Right cardiac atrium (tissue), 5 donors: ENCODE measurements at regions of chr5 and their contacts with region 1.

Region 1: GRCh38 chr5:923281-923873 is 30.7 kb downstream of the TRIP13 start:
- DNase-seq: peak; percentile 89 to 95 (median 94)
- ATAC-seq: peak; percentile 89 to 90
- H3K4me3 ChIP-seq: no peak overlapping the region
- H3K27ac ChIP-seq: no peak overlapping the region
- H3K4me1 ChIP-seq: no peaks in the 10 kb centered on the region
- H3K27me3 ChIP-seq: no peaks in the 10 kb centered on the region

Region 2: DNA sequence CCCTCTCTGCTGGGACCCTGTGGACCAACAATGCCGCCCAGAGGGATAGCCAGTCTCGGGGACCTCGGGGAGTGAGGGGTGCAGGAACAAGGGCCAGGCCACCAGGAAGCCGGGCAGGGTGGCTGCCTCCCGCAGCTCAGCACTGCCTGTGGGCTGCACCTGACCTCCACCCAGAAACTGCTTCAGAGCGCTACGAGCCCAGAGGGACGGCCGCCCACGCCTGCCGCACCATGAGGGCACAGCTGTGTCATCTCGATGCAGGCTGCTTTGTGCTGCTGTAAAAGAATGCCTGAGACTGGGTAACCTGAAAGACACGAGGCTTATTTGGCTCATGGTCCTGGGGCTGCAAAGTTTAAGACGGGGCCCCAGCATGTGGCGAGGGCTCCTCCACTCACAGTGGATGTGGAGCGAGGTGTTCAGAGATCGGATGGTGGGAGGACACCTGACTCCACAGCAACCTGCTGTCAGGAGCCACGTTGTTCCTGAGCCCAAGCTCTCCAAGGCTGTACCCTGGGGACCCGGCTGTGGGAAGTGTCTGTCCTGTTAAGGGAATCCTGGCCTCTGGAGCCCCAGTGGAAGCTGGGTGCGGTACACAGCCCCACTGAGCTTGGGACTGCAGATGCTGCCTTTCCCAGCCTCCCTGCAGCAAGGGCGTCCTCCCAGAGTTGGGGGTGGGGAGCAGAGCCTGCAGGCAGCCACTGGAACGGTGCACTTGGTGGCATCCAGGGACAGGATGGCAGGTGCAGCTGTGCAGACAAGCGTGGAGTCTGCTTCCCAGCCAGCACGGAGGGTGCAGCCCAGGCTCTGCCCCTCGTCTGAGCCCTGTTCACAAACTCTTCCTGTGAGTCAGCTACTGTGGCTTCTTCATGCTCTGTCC is 60.8 kb before region 1 on chr5:
- intact Hi-C with region 1: no loop called
- DNase-seq: peak in 2 of 3 donors; percentile 39 to 45
- ATAC-seq: no peak
- H3K4me3 ChIP-seq: no peak overlapping the region
- H3K27ac ChIP-seq: no peak overlapping the region
- H3K4me1 ChIP-seq: no peaks in the 10 kb centered on the region
- H3K27me3 ChIP-seq: no peaks in the 10 kb centered on the region

Region 3: GRCh38 chr5:1140171-1140817 is 216.9 kb after region 1 on chr5:
- intact Hi-C with region 1: loop called in 2 of 4 experiments (anchors 10 kb)
- DNase-seq: peak; percentile 79 to 93 (median 92)
- ATAC-seq: peak; percentile 78 to 79
- H3K4me3 ChIP-seq: no peak overlapping the region
- H3K27ac ChIP-seq: no peak overlapping the region
- H3K4me1 ChIP-seq: no peaks in the 10 kb centered on the region
- H3K27me3 ChIP-seq: no peaks in the 10 kb centered on the region

Region 4: DNA sequence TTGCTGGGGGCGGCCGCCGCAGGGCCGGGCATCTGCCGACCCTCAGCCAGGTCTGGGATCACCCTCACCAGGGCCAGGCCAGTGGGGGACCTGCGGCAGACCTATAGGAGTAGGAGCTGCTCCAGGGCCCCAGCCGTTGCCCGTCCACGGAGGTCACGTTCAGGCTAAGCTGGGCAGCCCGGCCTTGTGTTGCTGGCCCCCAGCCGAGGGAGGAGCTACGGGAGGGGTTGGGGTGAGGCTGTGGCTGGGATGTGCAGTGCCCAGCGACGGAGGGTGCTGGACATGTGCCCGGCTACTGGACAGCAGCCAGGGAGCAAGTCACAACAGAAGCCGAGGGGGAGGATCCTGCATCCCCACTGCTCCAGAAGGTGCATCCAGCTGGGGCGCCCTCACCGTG is 238.5 kb after region 1 on chr5:
- intact Hi-C with region 1: loop called in 2 of 4 experiments (anchors 5 to 10 kb)
- DNase-seq: peak; percentile 55 to 89 (median 84)
- ATAC-seq: peak; percentile 63 to 74
- H3K4me3 ChIP-seq: no peak overlapping the region
- H3K27ac ChIP-seq: no peak overlapping the region
- H3K4me1 ChIP-seq: no peaks in the 10 kb centered on the region
- H3K27me3 ChIP-seq: no peaks in the 10 kb centered on the region

Region 5: GRCh38 chr5:1167728-1168709 is 244.6 kb after region 1 on chr5:
- intact Hi-C with region 1: loop called in 3 of 4 experiments (anchors 5 to 10 kb)
- DNase-seq: peak; percentile 70 to 86 (median 76)
- ATAC-seq: peak; percentile 66 to 78
- H3K4me3 ChIP-seq: no peak overlapping the region
- H3K27ac ChIP-seq: no peak overlapping the region
- H3K4me1 ChIP-seq: no peaks in the 10 kb centered on the region
- H3K27me3 ChIP-seq: no peaks in the 10 kb centered on the region

Region 6: DNA sequence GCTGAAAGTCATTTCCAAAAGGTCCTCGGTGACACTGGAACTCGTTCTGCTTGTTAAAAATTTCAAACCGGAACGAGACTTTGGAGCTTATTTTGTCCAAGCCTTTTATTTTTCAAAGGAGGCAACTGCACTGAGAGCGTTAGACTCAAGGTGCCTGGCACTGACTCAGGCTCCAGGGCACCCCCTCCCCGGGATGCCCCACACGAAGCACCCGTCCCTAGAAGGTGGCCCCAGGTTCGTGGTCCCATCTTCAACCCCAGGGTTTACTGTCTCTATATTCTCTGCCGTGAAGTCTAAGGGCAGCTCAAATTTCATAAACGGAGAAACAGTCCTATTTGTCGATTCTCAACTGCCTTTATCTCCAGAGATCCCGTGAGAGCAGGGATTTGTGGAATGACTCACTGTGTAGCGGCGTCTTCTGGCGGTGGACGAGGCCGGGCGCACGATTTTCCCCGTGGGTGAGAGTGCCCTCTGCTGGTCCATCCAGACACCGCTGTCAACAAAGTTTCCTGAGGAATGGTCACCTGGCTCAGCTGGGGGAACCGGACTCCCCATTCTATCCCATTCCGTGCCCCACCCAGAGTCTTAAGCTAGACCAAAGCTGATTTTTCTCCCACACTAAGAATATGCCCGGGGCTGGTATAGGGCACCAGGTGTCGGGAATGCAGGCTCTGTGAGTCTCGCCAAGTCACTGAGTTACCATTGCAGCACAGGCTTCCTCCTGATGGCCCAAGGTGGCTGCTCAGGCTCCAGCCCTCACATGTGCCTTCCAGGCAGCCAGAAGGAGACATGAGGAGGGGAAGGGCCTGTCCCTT is 251.0 kb after region 1 on chr5:
- intact Hi-C with region 1: loop called in 3 of 4 experiments (anchors 2 to 10 kb)
- DNase-seq: peak; percentile 69 to 86 (median 83)
- ATAC-seq: peak; percentile 61 to 77
- H3K4me3 ChIP-seq: no peak overlapping the region
- H3K27ac ChIP-seq: no peak overlapping the region
- H3K4me1 ChIP-seq: no peaks in the 10 kb centered on the region
- H3K27me3 ChIP-seq: no peaks in the 10 kb centered on the region